Activated B cell treated with CpG ODN at 0.5 μM for 24 hours (primary cell): ENCODE measurements at regions of chr15 and their contacts with region 1.

Region 1: GRCh38 chr15:51776952-51777574 is 25.7 kb downstream of the TMOD2 start:
- DNase-seq: no peak
- ATAC-seq: peak; percentile 70
- H3K4me3 Mint-ChIP-seq: no peak overlapping the region
- H3K27ac Mint-ChIP-seq: no peak overlapping the region
- H3K4me1 Mint-ChIP-seq: peaks cover 13% of the 10 kb centered on the region
- H3K27me3 Mint-ChIP-seq: no peaks in the 10 kb centered on the region
- CTCF ChIP-seq: peak; percentile 23

Region 2: DNA sequence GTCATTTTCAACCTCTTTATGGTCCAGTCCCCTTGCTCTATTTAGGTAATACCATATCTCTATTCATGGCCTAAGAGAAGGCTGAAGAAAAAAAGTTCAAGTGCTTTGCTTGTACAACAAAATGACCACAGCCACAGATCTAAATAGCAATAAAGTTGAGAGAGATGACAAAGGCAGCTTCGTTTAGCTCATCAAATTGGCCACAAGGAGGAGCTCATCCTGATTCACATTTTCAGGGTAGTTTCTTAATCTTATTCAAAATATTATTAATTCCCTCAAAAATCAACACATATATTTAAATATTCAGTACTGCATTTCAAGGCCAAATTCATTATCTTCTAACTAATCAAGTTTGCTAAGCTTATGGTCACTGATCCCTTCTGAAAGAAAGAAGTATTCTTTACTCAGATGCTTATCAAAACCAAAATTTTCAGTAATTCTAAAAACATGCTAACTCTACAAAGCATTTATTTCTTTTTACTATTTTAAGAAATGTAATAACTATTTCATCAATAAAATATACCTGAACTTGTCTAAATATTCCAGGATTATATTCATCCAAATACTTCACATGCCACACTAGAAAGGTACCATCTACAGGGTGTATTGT is 240.0 kb before region 1 on chr15:
- CTCF ChIA-PET with region 1: interaction called, 15 read pairs
- POLR2A ChIA-PET with region 1: no interaction called
- intact Hi-C with region 1: loop called (anchors 1 kb)
- DNase-seq: no peak
- ATAC-seq: no peak
- H3K4me3 Mint-ChIP-seq: no peak overlapping the region
- H3K27ac Mint-ChIP-seq: no peak overlapping the region
- H3K4me1 Mint-ChIP-seq: no peaks in the 10 kb centered on the region
- H3K27me3 Mint-ChIP-seq: no peaks in the 10 kb centered on the region
- CTCF ChIP-seq: no peak

Region 3: DNA sequence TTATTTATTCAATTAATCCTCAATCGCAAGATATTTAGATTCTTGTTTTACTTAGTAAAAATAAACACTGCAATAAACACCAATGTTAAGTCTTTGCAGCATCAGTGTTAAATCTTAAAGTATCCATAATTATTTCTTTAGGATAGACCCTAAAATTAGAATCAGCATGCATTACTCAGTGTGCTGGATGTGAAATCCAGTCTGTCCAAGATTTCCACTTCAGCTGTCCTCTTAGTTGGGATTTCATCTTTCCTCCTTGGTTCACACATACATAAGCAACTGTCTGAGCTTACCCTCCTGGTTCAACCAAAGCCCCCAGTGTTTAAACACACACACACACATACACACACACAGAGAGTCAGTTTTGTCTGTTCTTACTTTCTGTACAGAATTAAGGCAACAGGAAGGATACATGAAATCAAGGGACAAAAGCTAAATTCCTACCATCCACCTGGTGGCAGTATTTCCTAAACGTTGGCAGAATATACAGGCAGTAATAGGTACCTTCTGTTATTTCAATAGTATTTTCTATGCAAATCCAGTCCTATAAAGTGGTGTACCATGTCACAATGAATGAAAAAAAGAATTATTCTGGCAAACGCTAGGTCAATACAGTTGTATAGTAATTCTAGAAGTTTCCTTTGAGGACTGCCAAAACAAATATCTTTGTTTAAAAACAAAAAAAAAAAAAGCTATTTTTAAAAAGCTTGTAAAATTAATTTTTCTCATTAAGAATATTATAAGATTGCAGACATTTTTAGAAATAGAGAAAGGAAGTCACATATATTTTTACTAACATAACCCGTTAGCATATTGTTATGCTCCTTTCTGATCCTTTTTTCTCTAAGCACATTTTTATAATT is 127.2 kb before region 1 on chr15:
- CTCF ChIA-PET with region 1: interaction called, 348 read pairs
- POLR2A ChIA-PET with region 1: interaction called, 28 read pairs
- intact Hi-C with region 1: loop called (anchors 1 kb)
- DNase-seq: no peak
- ATAC-seq: peak; percentile 84
- H3K4me3 Mint-ChIP-seq: no peak overlapping the region
- H3K27ac Mint-ChIP-seq: no peak overlapping the region
- H3K4me1 Mint-ChIP-seq: no peaks in the 10 kb centered on the region
- H3K27me3 Mint-ChIP-seq: no peaks in the 10 kb centered on the region
- CTCF ChIP-seq: no peak

Region 4: GRCh38 chr15:51726351-51727073 is 50.6 kb before region 1 on chr15:
- CTCF ChIA-PET with region 1: interaction called, 36 read pairs
- POLR2A ChIA-PET with region 1: interaction called, 7 read pairs
- intact Hi-C with region 1: loop called (anchors 1 kb)
- DNase-seq: no peak
- ATAC-seq: peak; percentile 97
- H3K4me3 Mint-ChIP-seq: peak overlapping the region; percentile 52
- H3K27ac Mint-ChIP-seq: peak overlapping the region; percentile 59
- H3K4me1 Mint-ChIP-seq: peaks cover 74% of the 10 kb centered on the region
- H3K27me3 Mint-ChIP-seq: no peaks in the 10 kb centered on the region
- CTCF ChIP-seq: no peak

Region 5: GRCh38 chr15:51731549-51732267 is 45.4 kb before region 1 on chr15:
- CTCF ChIA-PET with region 1: interaction called, 58 read pairs
- POLR2A ChIA-PET with region 1: interaction called, 25 read pairs
- intact Hi-C with region 1: loop called (anchors 1 kb)
- DNase-seq: peak; percentile 44
- ATAC-seq: peak; percentile 61
- H3K4me3 Mint-ChIP-seq: peak overlapping the region; percentile 80
- H3K27ac Mint-ChIP-seq: peak overlapping the region; percentile 93
- H3K4me1 Mint-ChIP-seq: peaks cover 94% of the 10 kb centered on the region
- H3K27me3 Mint-ChIP-seq: no peaks in the 10 kb centered on the region
- CTCF ChIP-seq: no peak

Region 6: DNA sequence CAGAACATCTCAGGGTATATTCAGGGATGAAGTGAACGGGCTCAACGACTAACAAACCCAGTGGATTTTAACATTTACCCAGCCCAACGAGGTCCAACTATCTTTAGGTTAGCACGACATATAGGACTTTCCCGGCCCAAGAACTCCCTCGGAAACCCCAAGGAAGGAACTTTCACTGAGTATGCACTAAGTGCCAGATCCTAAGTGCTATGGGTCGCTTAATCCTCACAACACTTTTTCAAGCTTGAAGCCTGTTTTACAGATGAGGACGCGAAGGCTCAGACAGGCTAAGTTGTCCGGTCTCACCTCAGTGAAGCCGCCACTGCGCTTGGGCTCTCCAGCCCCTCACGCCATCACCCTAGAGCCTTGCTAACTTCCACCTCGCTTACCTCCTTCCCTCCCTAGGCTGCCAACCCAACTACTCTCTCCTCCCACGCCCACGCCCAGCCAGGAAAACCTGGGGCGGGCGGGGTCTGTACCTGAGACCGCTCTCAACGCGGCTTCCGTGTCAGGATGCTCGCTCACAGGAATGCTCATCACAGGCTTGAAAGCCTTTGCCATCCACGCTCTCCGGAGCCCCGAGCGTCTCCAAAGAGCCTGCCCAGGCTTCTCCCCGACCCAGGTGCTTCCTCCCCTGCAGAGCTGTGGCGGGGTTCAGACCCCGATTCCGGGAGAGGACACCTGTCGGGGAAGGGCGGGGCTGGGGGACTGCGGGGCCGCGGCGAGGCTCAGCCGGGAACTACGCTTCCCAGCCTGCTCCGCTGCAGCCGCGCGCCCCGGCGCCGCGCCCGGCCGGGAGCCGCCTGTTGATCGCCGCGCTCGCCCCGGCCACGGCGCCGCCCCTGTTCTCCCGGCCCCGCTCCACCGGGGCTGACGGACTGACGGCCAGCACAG is 26.0 kb before region 1 on chr15 and contains the start of gene TMOD2:
- CTCF ChIA-PET with region 1: interaction called, 17 read pairs
- POLR2A ChIA-PET with region 1: no interaction called
- intact Hi-C with region 1: loop called (anchors 1 kb)
- DNase-seq: peak; percentile 62
- ATAC-seq: peak; percentile 83
- H3K4me3 Mint-ChIP-seq: peak within 1 kb of the TSS; percentile 96
- H3K27ac Mint-ChIP-seq: peak within 1 kb of the TSS; percentile 86
- H3K4me1 Mint-ChIP-seq: peaks cover 37% of the 10 kb centered on the region
- H3K27me3 Mint-ChIP-seq: no peaks in the 10 kb centered on the region
- CTCF ChIP-seq: no peak
- total RNA-seq, gene TMOD2: 11.3 and 14.6 TPM in 2 replicates

Region 7: DNA sequence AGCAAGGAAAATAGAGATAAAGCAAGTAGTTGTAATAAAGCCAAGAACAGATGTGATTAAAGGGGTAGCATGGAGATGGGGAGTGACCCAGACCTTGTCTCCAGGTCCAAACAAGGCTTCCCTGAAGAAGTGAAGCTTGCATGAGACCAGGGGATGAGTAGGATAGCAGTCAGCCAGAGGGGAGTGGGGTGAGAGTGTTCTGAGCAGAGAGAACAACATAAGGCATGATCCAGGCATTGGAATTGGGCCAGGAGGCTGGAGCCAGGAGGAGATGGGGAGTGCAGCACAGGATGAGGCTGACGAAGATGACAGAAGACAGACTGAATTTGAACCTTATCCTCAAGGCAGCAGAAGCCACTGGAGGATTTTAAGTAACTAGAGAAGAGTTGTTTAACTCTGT is 18.4 kb before region 1 on chr15:
- CTCF ChIA-PET with region 1: interaction called, 15 read pairs
- POLR2A ChIA-PET with region 1: no interaction called
- intact Hi-C with region 1: no loop called
- DNase-seq: no peak
- ATAC-seq: no peak
- H3K4me3 Mint-ChIP-seq: no peak overlapping the region
- H3K27ac Mint-ChIP-seq: no peak overlapping the region
- H3K4me1 Mint-ChIP-seq: peaks cover 10% of the 10 kb centered on the region
- H3K27me3 Mint-ChIP-seq: no peaks in the 10 kb centered on the region
- CTCF ChIP-seq: no peak

Region 8: GRCh38 chr15:51874751-51875528 is 97.9 kb after region 1 on chr15:
- CTCF ChIA-PET with region 1: no interaction called
- POLR2A ChIA-PET with region 1: no interaction called
- intact Hi-C with region 1: no loop called
- DNase-seq: no peak
- ATAC-seq: no peak
- H3K4me3 Mint-ChIP-seq: no peak overlapping the region
- H3K27ac Mint-ChIP-seq: no peak overlapping the region
- H3K4me1 Mint-ChIP-seq: peaks cover 3% of the 10 kb centered on the region
- H3K27me3 Mint-ChIP-seq: no peaks in the 10 kb centered on the region
- CTCF ChIP-seq: no peak